ENCODE measurements at regions of chr10 and their contacts with region 1.

Region 1: GRCh38 chr10:47311932-47312662 is 10.2 kb upstream of the GDF2 start:
- DNase-seq: peak; percentile 79
- H3K4me3 Mint-ChIP-seq: no peak overlapping the region
- H3K27ac Mint-ChIP-seq: peak overlapping the region; percentile 63
- H3K4me1 Mint-ChIP-seq: peaks cover 16% of the 10 kb centered on the region
- H3K27me3 Mint-ChIP-seq: no peaks in the 10 kb centered on the region

Region 2: GRCh38 chr10:47024399-47025252 is 287.5 kb before region 1 on chr10:
- CTCF ChIA-PET with region 1: interaction called, 32 read pairs
- POLR2A ChIA-PET with region 1: interaction called, 3 read pairs
- DNase-seq: peak; percentile 68
- H3K4me3 Mint-ChIP-seq: no peak overlapping the region
- H3K27ac Mint-ChIP-seq: no peak overlapping the region
- H3K4me1 Mint-ChIP-seq: no peaks in the 10 kb centered on the region
- H3K27me3 Mint-ChIP-seq: no peaks in the 10 kb centered on the region

Region 3: GRCh38 chr10:47047671-47048525 is 264.2 kb before region 1 on chr10:
- CTCF ChIA-PET with region 1: interaction called, 128 read pairs
- POLR2A ChIA-PET with region 1: interaction called, 10 read pairs
- DNase-seq: peak; percentile 76
- H3K4me3 Mint-ChIP-seq: no peak overlapping the region
- H3K27ac Mint-ChIP-seq: no peak overlapping the region
- H3K4me1 Mint-ChIP-seq: peaks cover 7% of the 10 kb centered on the region
- H3K27me3 Mint-ChIP-seq: no peaks in the 10 kb centered on the region

Region 4: DNA sequence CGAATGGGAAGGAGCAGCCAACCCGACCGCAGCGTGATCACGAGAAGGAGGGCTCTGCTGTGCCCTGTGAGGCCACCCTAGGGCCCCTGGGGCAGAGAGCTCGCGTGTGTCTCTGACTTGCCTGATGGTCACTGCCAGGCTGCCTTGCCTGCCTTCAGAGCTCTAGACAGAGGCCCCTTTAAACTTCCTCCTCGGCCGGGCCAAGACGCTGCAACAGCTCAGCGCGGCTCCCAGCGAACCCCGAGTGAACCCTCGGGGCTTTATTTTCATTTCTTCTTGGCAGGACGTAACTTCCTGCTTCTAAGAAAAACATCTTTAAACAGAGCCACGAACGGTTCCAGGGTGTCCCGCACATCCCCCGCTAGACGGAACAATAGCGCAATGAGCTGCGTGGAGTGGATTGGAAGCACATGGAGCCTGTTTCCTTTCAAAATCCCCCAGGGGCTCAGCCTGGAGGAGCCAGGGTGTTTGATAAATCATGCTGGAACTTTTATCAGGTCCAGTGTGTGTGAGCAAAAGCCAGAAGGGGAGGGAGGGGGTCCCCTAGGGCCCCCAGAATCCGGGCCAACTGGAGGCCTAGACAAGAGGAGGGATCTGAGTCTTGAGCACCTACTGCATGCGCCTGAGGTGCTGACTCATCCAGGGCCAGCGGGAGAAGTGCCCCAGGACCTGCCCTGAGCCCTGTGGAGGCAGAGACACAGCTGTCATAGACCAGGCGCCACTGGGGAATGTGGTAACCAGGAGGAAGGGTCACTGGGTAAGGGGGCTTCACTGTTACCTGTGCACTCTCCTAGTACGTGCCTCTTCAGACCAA is 146.2 kb before region 1 on chr10:
- CTCF ChIA-PET with region 1: no interaction called
- POLR2A ChIA-PET with region 1: no interaction called
- DNase-seq: peak; percentile 36
- H3K4me3 Mint-ChIP-seq: peak overlapping the region; percentile 65
- H3K27ac Mint-ChIP-seq: peak overlapping the region; percentile 56
- H3K4me1 Mint-ChIP-seq: peaks cover 18% of the 10 kb centered on the region
- H3K27me3 Mint-ChIP-seq: no peaks in the 10 kb centered on the region

Measured in activated CD4-positive, alpha-beta memory T cell treated with anti-CD3 and anti-CD28 coated beads, Interleukin-2, amount 10 ng/mL, durations not matched to agents 7 days and 5 days (primary cell).